ENCODE measurements at regions of chr12 and their contacts with region 1.

Region 1: GRCh38 chr12:113135178-113136127 is at the start of gene RASAL1:
- DNase-seq: peak; percentile 94
- ATAC-seq: peak; percentile 89
- H3K4me3 Mint-ChIP-seq: peak within 1 kb of the TSS; percentile 74
- H3K27ac Mint-ChIP-seq: 0 out of 2 replicates have a peak within 1 kb of the TSS, but pooled peaks have one; percentile 20
- H3K4me1 Mint-ChIP-seq: peaks cover 18% of the 10 kb centered on the region
- H3K27me3 Mint-ChIP-seq: peaks cover 26% of the 10 kb centered on the region
- CTCF ChIP-seq: peak; percentile 81
- total RNA-seq, gene RASAL1: 6.9 to 8.1 TPM (median 8.0 TPM) in 3 replicates

Region 2: GRCh38 chr12:113022563-113023297 is 112.7 kb before region 1 on chr12:
- CTCF ChIA-PET with region 1: no interaction called
- POLR2A ChIA-PET with region 1: no interaction called
- DNase-seq: no peak
- ATAC-seq: no peak
- H3K4me3 Mint-ChIP-seq: no peak overlapping the region
- H3K27ac Mint-ChIP-seq: no peak overlapping the region
- H3K4me1 Mint-ChIP-seq: no peaks in the 10 kb centered on the region
- H3K27me3 Mint-ChIP-seq: peaks cover 5% of the 10 kb centered on the region; the same call in 1 of the 2 replicates
- CTCF ChIP-seq: no peak

Region 3: DNA sequence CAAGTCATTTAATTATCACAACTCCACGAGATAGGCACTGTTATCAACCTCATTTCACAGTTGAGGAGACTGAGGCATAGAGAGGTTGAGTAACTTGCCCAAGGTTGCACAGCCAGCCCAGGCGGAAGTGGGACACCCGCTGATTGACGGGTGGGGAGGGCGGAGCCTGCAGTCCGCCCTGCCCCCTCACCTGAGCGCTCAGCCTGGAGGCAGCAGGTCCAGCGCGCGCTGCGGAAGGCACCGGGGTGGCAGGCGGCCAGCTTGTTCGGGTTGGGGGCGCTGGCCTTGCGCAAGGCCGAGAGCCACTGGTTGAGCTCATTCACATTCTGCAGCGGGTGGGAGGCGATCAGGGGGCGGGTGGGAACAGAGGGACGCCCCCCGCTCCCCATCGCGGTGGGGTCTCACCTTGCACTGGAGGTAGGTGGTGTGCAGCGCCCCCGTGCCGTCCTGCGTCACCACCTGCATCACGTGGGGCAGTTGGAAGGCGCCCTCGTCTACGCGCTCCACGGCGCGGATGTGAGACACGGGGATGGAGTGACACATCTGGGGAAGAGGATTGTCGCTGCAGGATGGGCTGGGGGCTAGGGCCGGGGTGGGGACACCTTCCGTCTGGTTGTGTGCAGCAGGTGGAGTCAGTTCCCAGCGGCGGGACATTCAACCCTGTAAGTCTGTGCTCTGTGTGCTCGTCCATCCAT is 31.6 kb before region 1 on chr12:
- CTCF ChIA-PET with region 1: interaction called, 19 read pairs
- POLR2A ChIA-PET with region 1: interaction called, 3 read pairs
- DNase-seq: peak; percentile 85
- ATAC-seq: peak; percentile 95
- H3K4me3 Mint-ChIP-seq: peak overlapping the region; percentile 71
- H3K27ac Mint-ChIP-seq: no peak overlapping the region
- H3K4me1 Mint-ChIP-seq: peaks cover 2% of the 10 kb centered on the region
- H3K27me3 Mint-ChIP-seq: no peaks in the 10 kb centered on the region; the same call in 1 of the 2 replicates
- CTCF ChIP-seq: no peak

Region 4: GRCh38 chr12:113120670-113121370 is 14.6 kb before region 1 on chr12:
- CTCF ChIA-PET with region 1: interaction called, 15 read pairs
- POLR2A ChIA-PET with region 1: no interaction called
- DNase-seq: no peak
- ATAC-seq: peak; percentile 16; the same call in 1 of the 2 replicates
- H3K4me3 Mint-ChIP-seq: no peak overlapping the region
- H3K27ac Mint-ChIP-seq: no peak overlapping the region
- H3K4me1 Mint-ChIP-seq: peaks cover 6% of the 10 kb centered on the region
- H3K27me3 Mint-ChIP-seq: peaks cover 5% of the 10 kb centered on the region
- CTCF ChIP-seq: no peak

Region 5: GRCh38 chr12:113152835-113153814 is 17.7 kb after region 1 on chr12:
- CTCF ChIA-PET with region 1: interaction called, 181 read pairs
- POLR2A ChIA-PET with region 1: interaction called, 4 read pairs
- DNase-seq: peak; percentile 72
- ATAC-seq: peak; percentile 49
- H3K4me3 Mint-ChIP-seq: peak overlapping the region; percentile 67
- H3K27ac Mint-ChIP-seq: no peak overlapping the region
- H3K4me1 Mint-ChIP-seq: peaks cover 21% of the 10 kb centered on the region
- H3K27me3 Mint-ChIP-seq: peaks cover 58% of the 10 kb centered on the region
- CTCF ChIP-seq: no peak

Region 6: GRCh38 chr12:113161414-113162016 is 26.1 kb after region 1 on chr12:
- CTCF ChIA-PET with region 1: interaction called, 45 read pairs
- POLR2A ChIA-PET with region 1: interaction called, 3 read pairs
- DNase-seq: peak; percentile 97
- ATAC-seq: peak; percentile 95
- H3K4me3 Mint-ChIP-seq: peak overlapping the region; percentile 49
- H3K27ac Mint-ChIP-seq: peak overlapping the region; percentile 83
- H3K4me1 Mint-ChIP-seq: peaks cover 28% of the 10 kb centered on the region
- H3K27me3 Mint-ChIP-seq: no peaks in the 10 kb centered on the region
- CTCF ChIP-seq: no peak

Region 7: DNA sequence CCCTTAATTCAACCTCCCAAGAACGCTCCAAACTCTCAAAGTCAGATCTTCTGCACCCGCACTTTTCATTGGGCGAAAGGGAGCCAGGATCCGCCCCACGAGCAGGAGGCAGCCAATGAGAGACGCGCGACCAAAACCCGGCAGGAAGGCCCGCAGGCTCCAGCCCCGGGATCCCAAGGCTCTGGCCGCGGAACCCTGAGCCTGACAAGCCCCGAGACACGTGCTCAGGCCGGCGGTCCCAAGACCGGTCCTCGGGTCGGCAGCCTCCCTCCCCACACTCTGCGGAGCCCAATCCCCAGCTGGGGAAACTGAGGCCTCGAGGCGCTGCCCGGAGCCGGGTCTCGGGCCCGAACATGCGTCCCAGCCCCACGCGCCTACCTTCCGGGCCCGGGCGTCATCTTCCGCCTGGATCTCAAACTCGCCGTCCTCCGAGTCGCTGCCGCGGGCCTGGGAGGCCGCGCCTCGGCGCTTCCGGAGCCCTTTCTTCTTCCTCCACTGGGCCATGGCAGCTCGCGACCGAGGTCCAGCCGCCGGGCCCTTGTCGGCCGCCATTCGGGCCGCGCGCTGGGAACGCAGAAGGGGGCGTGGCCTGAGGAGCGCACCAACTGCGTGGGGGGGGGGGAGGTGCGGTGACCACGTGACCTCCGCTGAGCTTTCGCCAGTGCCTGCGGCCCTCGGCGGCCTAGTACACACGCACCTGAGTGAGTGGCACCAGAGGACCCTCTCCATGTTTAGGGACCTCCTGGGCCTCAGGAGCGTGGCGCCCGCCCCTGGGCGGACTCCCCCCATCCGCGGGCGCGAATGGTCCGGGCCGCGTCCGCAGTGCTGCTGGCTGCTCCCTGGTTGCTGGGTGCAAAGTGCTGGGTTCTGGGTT is 49.7 kb after region 1 on chr12 and contains the starts of genes DDX54 and RITA1:
- CTCF ChIA-PET with region 1: interaction called, 11 read pairs
- POLR2A ChIA-PET with region 1: no interaction called
- DNase-seq: peak; percentile 89
- ATAC-seq: peak; percentile 87
- H3K4me3 Mint-ChIP-seq: peak within 1 kb of the TSS; percentile 88
- H3K27ac Mint-ChIP-seq: peak within 1 kb of the TSS; percentile 76
- H3K4me1 Mint-ChIP-seq: peaks cover 14% of the 10 kb centered on the region
- H3K27me3 Mint-ChIP-seq: no peaks in the 10 kb centered on the region
- CTCF ChIP-seq: no peak
- total RNA-seq, gene DDX54: 120 to 151 TPM (median 123 TPM) in 3 replicates
- total RNA-seq, gene RITA1: 26.4 to 29.3 TPM (median 27.1 TPM) in 3 replicates